ENCODE measurements at regions of chr6 and their contacts with region 1.

Region 1: DNA sequence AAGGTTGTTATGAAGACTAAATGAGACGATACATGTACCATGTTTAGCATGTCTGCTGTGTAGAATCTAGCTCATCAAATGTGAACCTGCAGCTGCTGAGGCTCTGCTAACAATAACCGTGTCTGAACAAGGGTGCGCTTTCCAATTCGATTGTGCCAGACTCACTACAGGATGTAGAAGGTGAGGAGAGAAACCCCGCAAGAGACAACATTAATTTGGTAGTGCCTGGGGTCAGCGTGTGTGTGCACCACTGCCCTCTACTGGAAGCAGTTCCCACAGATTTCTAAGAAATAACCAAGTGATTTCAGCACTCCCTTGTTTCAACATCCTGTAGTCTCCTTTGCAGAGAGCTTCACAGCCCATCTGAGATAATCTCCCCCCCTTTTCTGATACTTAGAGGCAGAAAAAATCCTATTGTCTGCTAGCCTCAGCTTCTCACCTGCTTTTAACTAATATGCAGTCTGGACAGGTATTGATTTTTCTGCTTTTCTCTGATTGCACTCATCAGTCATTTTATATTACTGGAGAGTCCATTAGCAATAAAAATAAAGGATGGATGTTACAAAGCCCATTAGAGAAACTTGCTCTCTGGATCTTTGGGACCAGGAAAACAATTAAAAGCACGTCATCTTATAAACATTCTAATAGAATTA is 96.7 kb upstream of the BACH2 start:
- DNase-seq: peak; percentile 47 to 87 (median 70)
- ATAC-seq: peak; percentile 62 to 69 (median 66)
- H3K4me3 ChIP-seq: no peak overlapping the region
- H3K4me3 Mint-ChIP-seq: no peak overlapping the region
- H3K27ac ChIP-seq: no peak overlapping the region
- H3K27ac Mint-ChIP-seq: peak overlapping the region; percentile 19 to 52
- H3K4me1 ChIP-seq: peaks cover 19 to 24% of the 10 kb centered on the region in 2 experiments
- H3K4me1 Mint-ChIP-seq: peaks cover 30 to 39% (median 38%) of the 10 kb centered on the region in 3 donors
- H3K27me3 ChIP-seq: no peaks in the 10 kb centered on the region
- H3K27me3 Mint-ChIP-seq: no peaks in the 10 kb centered on the region

Region 2: DNA sequence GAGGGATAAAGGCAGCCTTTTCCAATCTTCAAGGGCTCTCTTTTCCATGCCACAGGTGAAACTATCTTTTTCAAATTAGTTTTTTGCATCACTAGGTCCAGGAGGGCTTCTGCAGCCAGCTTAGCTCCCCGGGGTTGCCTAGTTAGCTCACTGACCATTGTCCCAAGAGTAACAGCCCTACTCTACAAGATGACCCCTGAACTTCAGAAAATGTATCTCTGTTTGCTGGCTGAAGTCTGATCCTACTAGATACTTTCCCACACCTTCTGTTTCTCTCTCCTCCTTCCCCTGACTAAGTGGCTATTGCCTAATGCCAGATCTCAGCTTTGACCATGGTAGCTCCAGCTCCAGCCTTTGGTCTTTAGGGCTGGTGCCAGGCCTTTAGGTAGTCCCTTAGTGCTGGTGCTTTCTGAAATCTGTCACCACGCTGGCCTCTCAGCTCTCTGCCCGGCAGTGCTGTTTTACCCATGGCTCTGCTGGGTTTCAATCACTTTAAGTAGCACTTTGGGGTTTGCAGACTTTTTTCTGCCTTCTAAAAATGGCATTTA is 1685.1 kb before region 1 on chr6:
- CTCF ChIA-PET with region 1: no interaction called
- POLR2A ChIA-PET with region 1: no interaction called
- DNase-seq: no peak
- ATAC-seq: no peak
- H3K4me3 ChIP-seq: no peak overlapping the region
- H3K4me3 Mint-ChIP-seq: no peak overlapping the region
- H3K27ac ChIP-seq: no peak overlapping the region
- H3K27ac Mint-ChIP-seq: peak overlapping the region in 1 of 2 donors; percentile 52
- H3K4me1 ChIP-seq: no peaks in the 10 kb centered on the region
- H3K4me1 Mint-ChIP-seq: peaks cover 3 to 10% (median 8%) of the 10 kb centered on the region in 3 donors
- H3K27me3 ChIP-seq: no peaks in the 10 kb centered on the region
- H3K27me3 Mint-ChIP-seq: no peaks in the 10 kb centered on the region

Region 3: GRCh38 chr6:90290811-90291420 is 102.4 kb before region 1 on chr6:
- CTCF ChIA-PET with region 1: interaction called, 8 to 15 read pairs
- POLR2A ChIA-PET with region 1: interaction called, 3 read pairs
- DNase-seq: no peak
- ATAC-seq: no peak
- H3K4me3 ChIP-seq: no peak overlapping the region
- H3K4me3 Mint-ChIP-seq: peak overlapping the region; percentile 1 to 92 (median 84)
- H3K27ac ChIP-seq: no peak overlapping the region
- H3K27ac Mint-ChIP-seq: peak overlapping the region; percentile 94
- H3K4me1 ChIP-seq: peaks cover 43 to 69% of the 10 kb centered on the region in 2 experiments
- H3K4me1 Mint-ChIP-seq: peaks cover 86 to 88% (median 87%) of the 10 kb centered on the region in 3 donors
- H3K27me3 ChIP-seq: peaks cover 0 to 3% of the 10 kb centered on the region in 2 experiments
- H3K27me3 Mint-ChIP-seq: no peaks in the 10 kb centered on the region

Region 4: GRCh38 chr6:90303039-90303438 is 90.3 kb before region 1 on chr6:
- CTCF ChIA-PET with region 1: interaction called, 6 to 10 read pairs
- POLR2A ChIA-PET with region 1: interaction called in 1 of 2 experiments, 4 read pairs
- DNase-seq: no peak
- ATAC-seq: no peak
- H3K4me3 ChIP-seq: no peak overlapping the region
- H3K4me3 Mint-ChIP-seq: peak overlapping the region in 1 of 3 donors; percentile 19
- H3K27ac ChIP-seq: no peak overlapping the region
- H3K27ac Mint-ChIP-seq: no peak overlapping the region
- H3K4me1 ChIP-seq: peaks cover 0 to 2% of the 10 kb centered on the region in 2 experiments
- H3K4me1 Mint-ChIP-seq: peaks cover 13 to 22% (median 18%) of the 10 kb centered on the region in 3 donors
- H3K27me3 ChIP-seq: peaks cover 0 to 2% of the 10 kb centered on the region in 2 experiments
- H3K27me3 Mint-ChIP-seq: peaks cover 0 to 8% of the 10 kb centered on the region in 2 donors

Region 5: DNA sequence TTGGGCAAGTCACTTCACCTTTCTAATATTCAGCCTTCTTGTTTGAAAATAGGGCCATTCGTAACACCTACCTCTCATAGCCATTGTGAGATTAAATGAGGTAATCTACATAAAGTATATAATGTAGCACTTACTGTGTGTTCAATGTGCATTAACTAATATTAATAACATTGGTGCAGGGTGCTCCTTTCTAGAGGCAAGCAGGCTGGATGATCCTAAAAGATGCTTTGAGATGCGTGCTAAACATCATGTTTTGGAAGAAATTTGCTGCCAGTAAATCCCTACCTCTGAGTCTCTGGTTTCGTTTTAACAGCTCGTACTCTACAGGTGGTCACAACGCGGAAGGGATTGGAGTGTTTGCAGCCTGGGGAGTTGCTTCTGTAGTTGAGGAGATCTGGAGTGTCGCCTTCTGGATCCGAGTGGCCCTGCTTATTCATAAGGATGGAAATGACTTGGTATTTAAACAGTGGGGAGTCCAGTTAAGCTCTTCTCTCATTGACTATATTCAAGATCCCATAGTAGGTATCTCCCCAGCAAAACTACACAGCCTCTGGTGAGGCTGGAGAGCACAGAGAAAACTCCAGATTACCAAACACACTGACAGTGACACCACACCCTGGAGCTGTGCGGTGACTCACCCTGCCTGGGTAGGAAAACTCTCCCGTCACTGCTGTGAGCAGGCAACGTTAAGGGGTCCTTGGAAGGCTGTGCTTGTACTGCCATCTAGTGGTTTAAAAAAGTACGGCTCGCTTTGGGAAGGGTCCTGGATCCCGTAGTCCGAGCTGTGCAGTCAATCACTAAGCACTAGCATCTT is 85.6 kb after region 1 on chr6:
- CTCF ChIA-PET with region 1: interaction called, 6 to 22 read pairs
- POLR2A ChIA-PET with region 1: no interaction called
- DNase-seq: peak; percentile 59 to 91 (median 71)
- ATAC-seq: peak; percentile 98 to 99 (median 99)
- H3K4me3 ChIP-seq: no peak overlapping the region
- H3K4me3 Mint-ChIP-seq: peak overlapping the region in 1 of 3 donors; percentile 26
- H3K27ac ChIP-seq: no peak overlapping the region
- H3K27ac Mint-ChIP-seq: peak overlapping the region; percentile 31 to 84
- H3K4me1 ChIP-seq: peaks cover 2 to 10% of the 10 kb centered on the region in 2 experiments
- H3K4me1 Mint-ChIP-seq: peaks cover 25 to 41% (median 40%) of the 10 kb centered on the region in 3 donors
- H3K27me3 ChIP-seq: no peaks in the 10 kb centered on the region
- H3K27me3 Mint-ChIP-seq: no peaks in the 10 kb centered on the region

Region 6: GRCh38 chr6:91081452-91082067 is 688.2 kb after region 1 on chr6:
- CTCF ChIA-PET with region 1: no interaction called
- POLR2A ChIA-PET with region 1: no interaction called
- DNase-seq: peak in 1 of 35 experiments; percentile 5
- ATAC-seq: peak in 1 of 4 experiments; percentile 26
- H3K4me3 ChIP-seq: no peak overlapping the region
- H3K4me3 Mint-ChIP-seq: no peak overlapping the region
- H3K27ac ChIP-seq: no peak overlapping the region
- H3K27ac Mint-ChIP-seq: no peak overlapping the region
- H3K4me1 ChIP-seq: no peaks in the 10 kb centered on the region
- H3K4me1 Mint-ChIP-seq: no peaks in the 10 kb centered on the region
- H3K27me3 ChIP-seq: peaks cover 0 to 2% of the 10 kb centered on the region in 2 experiments
- H3K27me3 Mint-ChIP-seq: peaks cover 0 to 5% of the 10 kb centered on the region in 2 donors

Measured in T-cell (primary cell).